GM23248 (cell line): ENCODE measurements at regions of chr1 and their contacts with region 1.

Region 1: GRCh38 chr1:30779294-30780071 is 21.9 kb upstream of the LAPTM5 start:
- DNase-seq: peak; percentile 73
- H3K4me3 ChIP-seq: no peak overlapping the region
- H3K27ac ChIP-seq: no peak overlapping the region
- H3K4me1 ChIP-seq: no peaks in the 10 kb centered on the region
- H3K27me3 ChIP-seq: no peaks in the 10 kb centered on the region

Region 2: DNA sequence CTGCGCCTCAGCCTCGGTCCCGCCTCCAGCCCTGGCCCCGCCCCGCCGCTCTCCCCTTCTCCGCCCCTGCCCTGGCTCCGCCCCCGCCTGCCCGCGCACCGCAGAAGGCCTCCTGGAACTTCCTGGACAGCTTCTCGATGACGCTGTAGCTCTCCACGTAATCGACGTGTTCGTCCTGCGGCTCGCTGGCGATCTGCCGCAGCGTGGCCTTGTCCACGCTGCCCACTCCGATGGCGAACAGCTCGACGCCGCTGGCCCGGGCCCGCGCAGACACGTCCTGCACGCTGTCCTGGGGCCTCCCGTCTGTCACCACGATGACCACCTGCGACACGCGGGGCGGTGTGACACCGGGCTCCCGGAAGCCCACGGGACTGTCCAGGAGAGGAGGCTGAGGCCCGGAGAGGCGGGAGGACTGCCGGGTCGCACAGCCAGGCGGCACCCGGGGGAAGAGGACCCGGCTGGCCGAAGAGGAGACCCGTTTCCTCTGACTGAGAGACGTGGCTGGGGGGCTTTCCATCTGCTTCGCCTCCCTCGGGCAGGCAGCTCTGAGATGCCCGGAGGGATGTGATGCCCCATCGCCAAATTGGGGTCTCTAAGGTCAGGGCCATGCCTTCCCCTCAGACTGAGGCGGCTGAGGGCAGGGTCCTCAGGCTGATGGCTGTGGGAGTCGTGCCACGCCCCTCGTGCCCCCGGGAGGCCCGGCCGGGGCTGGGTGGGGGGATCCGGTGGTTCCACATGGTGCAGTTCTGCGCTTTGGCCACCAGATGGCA is 60.7 kb before region 1 on chr1:
- in situ Hi-C with region 1: loop called (anchors 5 kb)
- DNase-seq: peak; percentile 99
- H3K4me3 ChIP-seq: peak overlapping the region; percentile 73
- H3K27ac ChIP-seq: peak overlapping the region; percentile 92
- H3K4me1 ChIP-seq: no peaks in the 10 kb centered on the region
- H3K27me3 ChIP-seq: no peaks in the 10 kb centered on the region